Panc1 (cell line): ENCODE measurements at regions of chr19 and their contacts with region 1.

Region 1: DNA sequence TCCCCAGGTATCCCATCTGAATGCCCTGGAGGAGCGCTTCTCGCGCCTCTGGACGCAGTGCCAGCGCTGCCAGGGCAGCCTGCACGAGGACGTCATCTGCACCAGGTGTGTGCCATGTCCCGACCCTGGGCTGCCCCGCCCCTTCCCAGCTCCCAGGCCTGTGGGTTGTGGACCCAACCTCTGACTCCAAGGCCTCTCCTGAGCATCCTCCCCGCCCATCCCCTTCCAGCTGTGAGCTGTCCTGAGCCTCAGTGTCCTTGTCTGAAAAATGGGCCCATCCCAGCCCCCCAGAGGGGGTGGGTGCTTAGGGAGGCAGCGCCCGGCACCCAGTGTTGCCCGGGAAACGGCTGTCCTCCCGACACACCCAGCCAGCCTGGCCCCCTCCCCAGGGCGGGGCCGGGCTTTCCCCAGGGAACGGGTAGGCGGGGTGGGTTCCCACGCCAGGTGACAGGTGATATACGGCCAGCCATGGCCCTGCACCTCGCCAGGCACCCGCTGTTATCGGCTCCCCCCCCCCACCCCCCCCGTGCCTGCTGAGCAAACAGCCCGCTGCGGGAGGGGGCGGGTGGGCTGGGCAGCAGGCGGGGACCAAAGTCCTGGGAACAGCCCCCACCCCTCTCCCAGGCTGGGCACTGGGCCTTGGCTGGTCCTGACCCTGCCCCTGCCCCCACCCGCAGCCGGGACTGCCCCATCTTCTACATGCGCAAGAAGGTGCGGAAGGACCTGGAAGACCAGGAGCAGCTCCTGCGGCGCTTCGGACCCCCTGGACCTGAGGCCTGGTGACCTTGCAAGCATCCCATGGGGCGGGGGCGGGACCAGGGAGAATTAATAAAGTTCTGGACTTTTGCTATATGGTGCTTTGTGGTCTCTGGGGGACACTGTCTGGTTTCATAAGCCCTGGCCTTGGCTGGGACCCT is 1.3 kb upstream of the SPIB start:
- DNase-seq: no peak
- ATAC-seq: peak; percentile 37
- H3K4me3 ChIP-seq: no peak overlapping the region
- H3K27ac ChIP-seq: no peak overlapping the region
- H3K4me1 ChIP-seq: no peaks in the 10 kb centered on the region
- H3K27me3 ChIP-seq: no peaks in the 10 kb centered on the region
- CTCF ChIP-seq: no peak

Region 2: GRCh38 chr19:50025024-50025789 is 392.2 kb before region 1 on chr19 and contains the start of gene VRK3:
- CTCF ChIA-PET with region 1: no interaction called
- POLR2A ChIA-PET with region 1: interaction called, 11 read pairs
- in situ Hi-C with region 1: no loop called
- intact Hi-C with region 1: no loop called
- DNase-seq: peak; percentile 97
- ATAC-seq: peak; percentile 95
- H3K4me3 ChIP-seq: peak within 1 kb of the TSS; percentile 91 to 92
- H3K27ac ChIP-seq: peak within 1 kb of the TSS; percentile 89
- H3K4me1 ChIP-seq: peaks cover 4% of the 10 kb centered on the region; the same call in 1 of the 2 replicates
- H3K27me3 ChIP-seq: no peaks in the 10 kb centered on the region
- CTCF ChIP-seq: no peak
- total RNA-seq, gene VRK3: 32.6 TPM

Region 3: GRCh38 chr19:50383001-50383851 is 34.2 kb before region 1 on chr19:
- CTCF ChIA-PET with region 1: no interaction called
- POLR2A ChIA-PET with region 1: no interaction called
- in situ Hi-C with region 1: no loop called
- intact Hi-C with region 1: no loop called
- DNase-seq: no peak
- ATAC-seq: peak; percentile 43; the same call in 1 of the 2 replicates
- H3K4me3 ChIP-seq: peak overlapping the region; percentile 55 to 72
- H3K27ac ChIP-seq: peak overlapping the region; percentile 87
- H3K4me1 ChIP-seq: peaks cover 4% of the 10 kb centered on the region
- H3K27me3 ChIP-seq: no peaks in the 10 kb centered on the region
- CTCF ChIP-seq: no peak

Region 4: DNA sequence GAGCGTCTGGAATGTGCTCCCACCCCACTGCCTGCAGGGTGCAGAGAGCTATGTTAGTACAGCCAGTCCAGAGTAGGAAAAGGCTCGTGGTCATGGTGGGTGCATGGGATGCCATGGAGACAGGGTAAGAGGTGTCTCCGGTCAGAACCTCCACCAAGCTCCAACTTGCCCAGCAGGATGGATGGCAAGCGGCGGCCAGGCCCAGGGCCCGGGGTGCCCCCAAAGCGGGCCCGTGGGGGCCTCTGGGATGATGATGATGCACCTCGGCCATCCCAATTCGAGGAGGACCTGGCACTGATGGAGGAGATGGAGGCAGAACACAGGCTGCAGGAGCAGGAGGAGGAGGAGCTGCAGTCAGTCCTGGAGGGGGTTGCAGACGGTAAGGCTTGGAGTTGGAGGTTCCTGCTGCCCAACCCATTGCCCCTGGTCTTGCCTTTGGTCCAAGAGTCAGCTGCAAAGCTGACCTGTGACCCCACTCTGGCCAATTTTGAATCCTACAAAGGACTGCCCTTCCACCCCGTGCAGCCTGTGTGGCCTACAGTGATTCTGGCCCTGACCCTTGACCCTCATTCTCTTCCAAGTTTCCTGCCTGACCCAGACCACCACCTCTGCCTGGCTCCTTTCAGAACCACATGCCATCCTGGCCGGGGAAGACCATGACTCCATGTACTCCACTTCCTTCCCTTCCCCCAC is 18.6 kb before region 1 on chr19:
- CTCF ChIA-PET with region 1: no interaction called
- POLR2A ChIA-PET with region 1: no interaction called
- in situ Hi-C with region 1: no loop called
- intact Hi-C with region 1: no loop called
- DNase-seq: no peak
- ATAC-seq: no peak
- H3K4me3 ChIP-seq: no peak overlapping the region
- H3K27ac ChIP-seq: no peak overlapping the region
- H3K4me1 ChIP-seq: no peaks in the 10 kb centered on the region
- H3K27me3 ChIP-seq: no peaks in the 10 kb centered on the region
- CTCF ChIP-seq: no peak

Region 5: GRCh38 chr19:50500060-50500752 is 82.8 kb after region 1 on chr19:
- CTCF ChIA-PET with region 1: no interaction called
- POLR2A ChIA-PET with region 1: no interaction called
- in situ Hi-C with region 1: no loop called
- intact Hi-C with region 1: no loop called
- DNase-seq: no peak
- ATAC-seq: peak; percentile 57
- H3K4me3 ChIP-seq: no peak overlapping the region
- H3K27ac ChIP-seq: no peak overlapping the region
- H3K4me1 ChIP-seq: peaks cover 6% of the 10 kb centered on the region
- H3K27me3 ChIP-seq: no peaks in the 10 kb centered on the region
- CTCF ChIP-seq: no peak

Region 6: DNA sequence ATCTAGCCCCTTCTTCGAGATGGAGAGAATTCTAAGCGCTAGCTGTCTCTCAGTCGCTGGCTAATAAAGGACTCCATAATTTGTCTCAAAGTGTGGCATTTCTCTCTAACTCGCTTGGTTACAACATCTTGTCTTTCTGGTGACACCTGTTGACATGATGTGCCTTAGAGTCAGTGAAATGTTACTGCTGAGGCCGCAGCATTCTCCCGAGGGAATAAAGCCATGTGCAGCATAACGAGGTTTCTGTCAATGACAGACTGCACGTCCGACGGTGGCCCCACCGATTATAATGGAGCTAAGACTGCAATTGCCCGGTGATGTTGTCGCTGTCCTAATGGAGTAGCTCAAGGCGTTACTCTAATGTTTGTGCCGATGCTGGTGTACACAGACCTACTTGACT is 332.6 kb after region 1 on chr19:
- CTCF ChIA-PET with region 1: no interaction called
- POLR2A ChIA-PET with region 1: no interaction called
- in situ Hi-C with region 1: no loop called
- intact Hi-C with region 1: no loop called
- DNase-seq: no peak
- ATAC-seq: no peak
- H3K4me3 ChIP-seq: no peak overlapping the region
- H3K27ac ChIP-seq: no peak overlapping the region
- H3K4me1 ChIP-seq: no peaks in the 10 kb centered on the region
- H3K27me3 ChIP-seq: no peaks in the 10 kb centered on the region
- CTCF ChIP-seq: no peak